Adrenal gland (tissue), 19 donors: ENCODE measurements at regions of chr1 and their contacts with region 1.

Region 1: DNA sequence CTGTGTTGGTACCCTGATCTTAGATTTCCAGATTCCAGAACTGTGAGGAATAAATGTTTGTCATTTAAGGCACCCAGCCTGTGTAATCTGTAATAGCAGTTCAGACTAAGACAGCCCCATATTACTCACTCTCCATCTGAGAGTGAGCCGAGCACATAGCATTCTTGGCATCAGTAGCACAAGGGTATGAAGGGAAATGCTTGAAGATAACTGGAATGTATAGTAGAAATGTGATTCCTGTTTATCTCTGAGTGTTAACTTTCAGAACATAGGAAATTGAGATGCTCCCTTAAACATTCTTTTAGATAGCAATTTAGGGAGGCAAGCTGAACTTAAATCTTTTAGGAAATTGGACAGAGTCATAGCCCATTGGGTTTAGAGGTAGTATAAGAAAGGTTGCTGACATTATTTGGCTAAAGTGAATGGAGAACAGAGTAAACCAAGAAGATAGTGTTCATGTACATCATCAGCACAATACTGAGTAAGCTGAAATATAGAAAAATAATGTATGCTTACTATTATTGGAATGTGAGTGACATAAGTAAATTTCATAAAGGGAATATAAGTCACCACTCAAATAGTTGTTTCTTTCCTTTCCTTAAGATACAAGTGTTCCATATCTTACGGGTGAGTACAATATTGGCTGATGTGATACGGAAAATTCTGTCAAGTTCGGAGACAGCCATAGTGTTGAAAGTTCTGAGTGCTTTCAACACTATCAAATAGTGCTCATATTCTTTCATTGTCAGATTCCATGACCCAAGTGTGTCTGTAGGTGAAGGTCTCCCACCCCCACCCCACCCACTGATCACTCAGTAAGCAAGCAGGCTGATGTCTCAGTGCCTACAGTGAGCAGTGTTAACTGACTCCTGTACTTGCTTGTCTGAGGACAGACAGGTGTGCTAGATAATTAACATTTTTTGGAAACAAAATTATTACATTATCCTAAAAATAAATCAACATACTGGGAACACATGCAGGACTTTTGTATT is 73.7 kb downstream of the LRRC8D start:
- DNase-seq: no peak
- H3K4me3 ChIP-seq: no peak overlapping the region
- H3K27ac ChIP-seq: no peak overlapping the region
- H3K4me1 ChIP-seq: peaks cover 10 to 22% of the 10 kb centered on the region in 2 donors
- H3K27me3 ChIP-seq: no peaks in the 10 kb centered on the region
- CTCF ChIP-seq: no peak
- POLR2A ChIP-seq: no peak

Region 2: DNA sequence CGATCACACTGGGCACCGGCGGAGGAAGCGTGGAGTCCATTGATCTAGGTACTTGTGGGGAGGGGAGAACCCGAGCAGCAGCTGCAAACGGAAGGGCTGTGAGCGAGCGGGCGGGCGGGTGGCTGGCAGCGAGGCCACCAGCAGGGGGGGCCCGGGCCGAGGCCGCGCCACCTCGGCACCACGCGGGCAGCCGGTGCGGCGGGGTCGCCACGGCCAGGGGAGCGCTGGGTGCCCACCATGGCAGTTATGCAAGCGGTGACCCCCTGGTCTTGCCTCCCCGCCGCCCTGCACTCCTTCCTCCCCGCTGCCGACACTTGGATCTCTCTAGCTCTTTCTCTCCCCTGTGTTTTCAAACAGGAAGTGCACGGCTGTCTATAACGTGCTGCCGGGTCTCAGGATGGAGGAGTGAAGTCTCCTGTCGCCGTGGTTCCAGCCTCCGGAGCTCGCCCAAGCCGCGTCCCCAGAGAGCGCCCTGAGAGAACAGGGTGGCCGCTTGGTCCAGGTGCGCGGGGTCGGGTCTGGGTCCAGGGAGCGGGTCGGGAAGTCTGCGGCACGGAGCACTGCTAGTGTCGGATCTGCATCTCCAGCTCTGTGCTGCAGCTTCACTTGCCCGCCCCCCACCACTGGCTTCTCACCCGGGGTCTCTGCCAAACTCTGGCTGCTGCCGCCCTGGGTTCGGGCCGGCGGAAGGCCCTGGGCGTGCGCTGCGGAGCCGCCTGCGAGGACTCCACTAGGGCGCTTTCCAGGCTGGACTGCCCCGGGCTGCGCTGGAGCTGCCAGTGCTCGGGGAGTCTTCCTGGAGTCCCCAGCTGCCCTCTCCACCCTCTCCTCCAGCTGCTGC is 51.0 kb before region 1 on chr1:
- intact Hi-C with region 1: loop called in 1 of 2 experiments (anchors 5 kb)
- DNase-seq: peak; percentile 72 to 83 (median 76)
- H3K4me3 ChIP-seq: peak overlapping the region; percentile 11 to 87 (median 72)
- H3K27ac ChIP-seq: peak overlapping the region; percentile 43 to 96 (median 75)
- H3K4me1 ChIP-seq: peaks cover 12 to 47% of the 10 kb centered on the region in 2 donors
- H3K27me3 ChIP-seq: no peaks in the 10 kb centered on the region
- CTCF ChIP-seq: peak; percentile 7 to 79 (median 50)
- POLR2A ChIP-seq: peak; percentile 24 to 38